Endothelial cell of umbilical vein (primary cell): ENCODE measurements at regions of chr3 and their contacts with region 1.

Region 1: GRCh38 chr3:82087958-82088357 is 326.5 kb upstream of the GBE1 start:
- DNase-seq: peak; percentile 82
- H3K4me3 ChIP-seq: no peak overlapping the region
- H3K27ac ChIP-seq: peak overlapping the region; percentile 70
- H3K4me1 ChIP-seq: peaks cover 45% of the 10 kb centered on the region
- H3K27me3 ChIP-seq: no peaks in the 10 kb centered on the region
- CTCF ChIP-seq: no peak
- POLR2A ChIP-seq: no peak

Region 2: GRCh38 chr3:82030916-82031315 is 57.0 kb before region 1 on chr3:
- CTCF ChIA-PET with region 1: no interaction called
- POLR2A ChIA-PET with region 1: no interaction called
- dilution Hi-C with region 1: no loop called
- intact Hi-C with region 1: no loop called
- DNase-seq: no peak
- H3K4me3 ChIP-seq: no peak overlapping the region
- H3K27ac ChIP-seq: no peak overlapping the region
- H3K4me1 ChIP-seq: no peaks in the 10 kb centered on the region
- H3K27me3 ChIP-seq: peaks cover 2% of the 10 kb centered on the region in 2 experiments
- CTCF ChIP-seq: no peak
- POLR2A ChIP-seq: no peak

Region 3: DNA sequence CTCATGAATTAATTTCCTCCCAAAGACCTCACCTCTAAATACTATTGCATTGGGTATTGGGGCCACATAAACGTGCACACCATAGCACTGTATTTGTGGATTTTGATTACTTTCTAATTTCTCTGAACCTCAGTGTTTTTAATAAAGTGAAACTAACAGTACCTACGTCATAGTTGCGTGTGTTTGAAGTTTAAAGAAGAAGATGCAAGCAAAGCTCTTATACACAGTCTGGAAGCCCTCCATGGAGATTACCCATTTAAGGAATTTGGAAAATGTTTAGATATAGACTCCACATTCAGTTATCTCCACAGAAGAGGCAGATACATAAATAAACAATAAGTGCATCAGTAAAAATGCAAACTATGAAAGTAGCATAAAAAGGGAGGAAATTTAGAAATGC is 254.6 kb after region 1 on chr3:
- CTCF ChIA-PET with region 1: no interaction called
- POLR2A ChIA-PET with region 1: no interaction called
- dilution Hi-C with region 1: no loop called
- intact Hi-C with region 1: no loop called
- DNase-seq: no peak
- H3K4me3 ChIP-seq: no peak overlapping the region
- H3K27ac ChIP-seq: no peak overlapping the region
- H3K4me1 ChIP-seq: no peaks in the 10 kb centered on the region
- H3K27me3 ChIP-seq: no peaks in the 10 kb centered on the region
- CTCF ChIP-seq: no peak
- POLR2A ChIP-seq: no peak

Region 4: DNA sequence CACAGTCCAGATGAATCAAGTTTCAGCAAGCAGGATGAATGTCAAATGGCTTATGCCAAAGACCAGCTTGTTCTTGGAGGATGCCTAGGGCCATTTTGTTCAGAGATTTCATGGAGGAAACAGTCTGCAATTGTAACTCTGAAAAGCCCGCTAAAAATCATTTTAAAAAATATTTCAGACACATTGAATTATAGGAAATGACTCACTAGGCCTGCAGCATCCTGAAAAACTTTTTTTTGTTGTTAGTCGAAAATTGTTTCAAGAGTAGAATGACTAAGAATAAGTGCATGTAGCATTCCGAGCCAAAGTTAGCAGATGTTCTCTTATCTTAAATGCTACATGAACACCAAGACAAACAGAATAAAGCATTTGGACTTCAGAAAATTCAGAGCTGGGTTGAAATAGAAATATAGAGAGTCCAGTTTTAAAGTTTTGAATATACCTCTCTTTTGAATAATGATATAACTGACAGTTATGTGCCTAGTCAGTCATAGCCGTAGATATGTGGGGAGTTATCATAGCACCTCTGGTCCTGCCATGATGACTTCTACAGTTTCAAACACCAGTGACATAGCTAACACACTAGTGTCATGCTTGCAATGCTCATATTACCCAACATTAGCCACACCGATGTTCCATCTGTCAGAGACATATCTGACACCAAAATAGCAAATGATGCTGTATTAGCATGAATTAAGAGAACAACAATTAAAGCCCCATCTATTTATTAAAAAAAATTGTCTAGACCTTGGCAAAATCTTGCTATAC is 1136.3 kb after region 1 on chr3:
- CTCF ChIA-PET with region 1: no interaction called
- POLR2A ChIA-PET with region 1: no interaction called
- dilution Hi-C with region 1: no loop called
- intact Hi-C with region 1: loop called (anchors 10 kb)
- DNase-seq: peak; percentile 92
- H3K4me3 ChIP-seq: no peak overlapping the region
- H3K27ac ChIP-seq: peak overlapping the region; percentile 71
- H3K4me1 ChIP-seq: peaks cover 15% of the 10 kb centered on the region
- H3K27me3 ChIP-seq: no peaks in the 10 kb centered on the region
- CTCF ChIP-seq: no peak
- POLR2A ChIP-seq: no peak